Transverse colon (tissue), 4 donors: ENCODE measurements at regions of chr4 and their contacts with region 1.

Region 1: GRCh38 chr4:158729716-158730559 is 6.7 kb upstream of the PPID start:
- DNase-seq: peak; percentile 72
- H3K4me3 ChIP-seq: no peak overlapping the region
- H3K27ac ChIP-seq: no peak overlapping the region
- H3K4me1 ChIP-seq: no peaks in the 10 kb centered on the region
- H3K27me3 ChIP-seq: peaks cover 6% of the 10 kb centered on the region
- CTCF ChIP-seq: peak; percentile 85 to 93 (median 91)
- EP300 ChIP-seq: no peak
- POLR2A ChIP-seq: no peak

Region 2: DNA sequence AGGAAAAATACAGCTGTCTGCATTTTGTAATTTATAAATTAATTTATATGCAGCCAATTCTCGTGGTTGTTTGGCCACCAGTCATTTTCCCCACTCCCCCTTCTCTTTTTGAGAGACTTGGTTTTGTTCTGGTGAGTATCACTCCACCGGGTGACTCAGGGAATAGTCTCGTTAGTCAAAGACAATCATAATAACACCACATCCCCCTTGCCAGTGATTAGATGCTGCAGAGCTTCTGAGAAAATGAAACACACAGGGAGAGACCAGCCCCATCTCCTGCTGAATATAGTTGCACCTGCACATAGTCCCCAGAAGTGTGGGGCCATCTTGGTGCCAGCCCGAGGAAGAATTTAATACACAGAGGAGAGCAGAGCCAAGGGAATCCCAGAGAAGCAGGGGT is 30.9 kb after region 1 on chr4:
- in situ Hi-C with region 1: loop called in 1 of 4 experiments (anchors 5 kb)
- intact Hi-C with region 1: no loop called
- DNase-seq: no peak
- H3K4me3 ChIP-seq: no peak overlapping the region
- H3K27ac ChIP-seq: no peak overlapping the region
- H3K4me1 ChIP-seq: no peaks in the 10 kb centered on the region
- H3K27me3 ChIP-seq: no peaks in the 10 kb centered on the region
- CTCF ChIP-seq: no peak
- EP300 ChIP-seq: no peak
- POLR2A ChIP-seq: no peak

Region 3: DNA sequence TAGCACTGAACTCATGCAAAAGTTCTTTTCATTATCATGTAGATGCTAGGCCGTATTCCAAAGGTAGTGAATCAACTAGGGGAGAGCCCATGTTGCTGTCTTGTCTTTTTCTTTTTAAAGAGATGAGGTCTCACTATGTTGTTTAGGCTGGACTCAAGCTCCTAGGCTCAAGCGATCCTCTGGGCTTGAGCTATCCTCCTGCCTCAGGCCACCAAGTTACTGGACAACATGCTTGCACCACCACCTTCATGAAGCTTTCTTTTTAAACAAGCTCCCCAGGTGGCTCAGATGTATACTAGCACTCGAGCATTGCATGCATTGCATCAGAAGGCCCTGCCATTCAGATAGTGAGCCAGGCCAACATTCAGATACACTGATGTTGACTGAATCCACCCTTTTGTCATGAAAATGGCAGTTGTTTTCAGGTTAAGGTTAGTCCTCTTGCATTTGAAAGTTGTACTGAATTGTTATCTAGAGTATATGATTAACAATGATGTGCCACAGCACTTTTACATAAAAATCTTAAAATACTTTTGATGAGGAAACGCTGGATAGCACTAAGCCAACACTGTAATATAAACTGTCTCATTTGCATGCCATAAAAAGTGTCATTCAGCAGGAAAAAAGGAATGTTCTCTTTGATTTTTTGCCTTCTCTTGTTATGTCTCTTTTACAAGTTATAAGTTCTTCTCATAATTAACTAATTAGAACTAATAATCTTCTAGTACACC is 115.5 kb after region 1 on chr4:
- in situ Hi-C with region 1: loop called (anchors 5 to 10 kb)
- intact Hi-C with region 1: loop called (anchors 2 kb)
- DNase-seq: no peak
- H3K4me3 ChIP-seq: no peak overlapping the region
- H3K27ac ChIP-seq: no peak overlapping the region
- H3K4me1 ChIP-seq: peaks cover 0 to 15% (median under 1%) of the 10 kb centered on the region in 4 donors
- H3K27me3 ChIP-seq: no peaks in the 10 kb centered on the region
- CTCF ChIP-seq: no peak
- EP300 ChIP-seq: no peak
- POLR2A ChIP-seq: no peak

Region 4: DNA sequence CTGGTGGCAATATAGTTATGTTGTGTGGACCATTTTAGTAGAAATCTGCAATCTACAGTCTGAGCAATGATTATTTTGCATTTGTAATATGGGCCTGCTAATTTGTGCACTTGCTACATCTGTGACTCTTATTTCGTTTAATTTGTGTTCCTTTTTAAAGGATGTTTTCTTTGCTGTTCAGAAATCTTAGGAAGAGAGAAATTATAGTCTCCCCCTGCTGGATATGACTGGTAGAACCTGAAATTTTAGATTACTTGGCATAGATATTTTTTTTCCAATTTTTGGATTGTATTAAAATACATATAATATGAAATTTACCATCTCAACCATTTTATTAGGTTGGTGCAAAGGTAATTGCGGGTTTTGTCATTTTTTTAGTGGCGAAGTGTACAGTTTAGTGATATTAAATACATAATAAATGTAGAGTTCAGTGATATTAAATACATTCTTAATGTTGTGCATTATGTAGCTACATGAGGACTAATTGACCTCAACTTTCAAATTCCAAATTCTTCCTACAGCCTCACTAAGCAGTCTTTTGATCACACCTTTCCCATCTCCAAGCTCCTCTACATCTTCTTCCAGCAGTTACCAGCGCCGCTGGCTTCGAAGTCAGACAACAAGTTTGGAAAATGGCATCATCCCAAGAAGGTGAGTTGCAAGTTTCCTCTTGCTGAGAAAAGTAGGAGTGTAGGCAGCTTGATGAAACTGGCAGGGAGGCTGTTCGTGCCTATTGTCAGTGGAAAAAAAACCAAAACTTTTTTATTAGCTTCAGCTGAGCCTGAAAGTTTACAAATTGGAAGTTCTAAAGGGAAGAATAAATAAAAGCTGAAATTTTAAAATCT is 121.1 kb after region 1 on chr4:
- in situ Hi-C with region 1: loop called in 3 of 4 experiments (anchors 5 to 10 kb)
- intact Hi-C with region 1: loop called (anchors 2 kb)
- DNase-seq: no peak
- H3K4me3 ChIP-seq: no peak overlapping the region
- H3K27ac ChIP-seq: no peak overlapping the region
- H3K4me1 ChIP-seq: peaks cover 0 to 7% (median 3%) of the 10 kb centered on the region in 4 donors
- H3K27me3 ChIP-seq: no peaks in the 10 kb centered on the region
- CTCF ChIP-seq: peak; percentile 67 to 84 (median 71)
- EP300 ChIP-seq: no peak
- POLR2A ChIP-seq: no peak

Region 5: GRCh38 chr4:159201168-159201567 is 471.2 kb after region 1 on chr4:
- in situ Hi-C with region 1: loop called in 3 of 4 experiments (anchors 5 to 10 kb)
- intact Hi-C with region 1: loop called (anchors 10 kb)
- DNase-seq: no peak
- H3K4me3 ChIP-seq: no peak overlapping the region
- H3K27ac ChIP-seq: no peak overlapping the region
- H3K4me1 ChIP-seq: peaks cover 0 to 24% (median 0%) of the 10 kb centered on the region in 4 donors
- H3K27me3 ChIP-seq: no peaks in the 10 kb centered on the region
- CTCF ChIP-seq: no peak
- EP300 ChIP-seq: no peak
- POLR2A ChIP-seq: no peak

Region 6: GRCh38 chr4:159446266-159446976 is 716.5 kb after region 1 on chr4:
- in situ Hi-C with region 1: loop called in 1 of 4 experiments (anchors 25 kb)
- intact Hi-C with region 1: no loop called
- DNase-seq: peak; percentile 9
- H3K4me3 ChIP-seq: no peak overlapping the region
- H3K27ac ChIP-seq: no peak overlapping the region
- H3K4me1 ChIP-seq: no peaks in the 10 kb centered on the region
- H3K27me3 ChIP-seq: no peaks in the 10 kb centered on the region
- CTCF ChIP-seq: peak; percentile 60 to 82 (median 77)
- EP300 ChIP-seq: no peak
- POLR2A ChIP-seq: no peak